Heart right ventricle (tissue), 16 donors: ENCODE measurements at regions of chr1 and their contacts with region 1.

Region 1: DNA sequence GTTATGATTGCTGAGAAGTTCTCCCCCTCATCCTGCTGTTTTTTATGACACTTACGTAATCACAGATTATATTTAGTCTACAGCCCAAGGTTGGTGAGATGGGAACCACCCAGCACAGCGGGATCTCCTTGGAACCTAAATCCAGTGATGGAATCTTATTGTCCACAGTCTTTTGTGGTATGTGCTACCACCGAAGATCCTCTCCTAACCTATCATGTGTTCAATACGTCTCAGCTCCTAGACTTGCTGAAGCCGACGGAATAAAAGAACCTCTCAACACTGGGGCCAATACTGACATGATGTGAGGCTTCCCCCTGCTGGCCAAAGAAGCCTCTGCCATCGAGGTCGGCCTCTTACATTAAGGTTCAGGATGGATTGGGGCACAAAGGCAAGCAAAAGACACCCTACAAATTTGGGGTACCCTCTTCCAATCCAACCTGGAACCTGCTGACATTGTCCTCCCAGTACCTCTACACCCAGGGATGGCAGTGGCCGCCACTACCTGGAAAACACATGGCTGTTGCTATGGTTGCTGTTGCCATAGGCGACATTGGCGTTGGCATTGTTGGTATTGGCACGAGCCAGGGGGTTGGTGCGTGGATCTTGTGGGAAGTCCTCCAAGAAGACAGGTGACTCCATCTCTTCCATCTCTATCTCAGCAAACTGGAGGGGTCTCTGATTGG is 19.4 kb upstream of the KIF21B start:
- DNase-seq: peak; percentile 38 to 55
- ATAC-seq: peak; percentile 66 to 86 (median 82)
- H3K4me3 ChIP-seq: no peak overlapping the region
- H3K27ac ChIP-seq: no peak overlapping the region
- H3K4me1 ChIP-seq: peaks cover 0 to 9% (median 4%) of the 10 kb centered on the region in 9 donors
- H3K27me3 ChIP-seq: peaks cover 0 to 15% (median 8%) of the 10 kb centered on the region in 7 donors
- CTCF ChIP-seq: peak; percentile 56 to 89 (median 86)

Region 2: GRCh38 chr1:200558866-200559459 is 484.0 kb before region 1 on chr1:
- intact Hi-C with region 1: loop called in 3 of 10 experiments (anchors 5 kb)
- DNase-seq: peak in 1 of 2 donors; percentile 5
- ATAC-seq: no peak
- H3K4me3 ChIP-seq: no peak overlapping the region
- H3K27ac ChIP-seq: no peak overlapping the region
- H3K4me1 ChIP-seq: no peaks in the 10 kb centered on the region
- H3K27me3 ChIP-seq: no peaks in the 10 kb centered on the region
- CTCF ChIP-seq: peak; percentile 11 to 69 (median 55)

Region 3: DNA sequence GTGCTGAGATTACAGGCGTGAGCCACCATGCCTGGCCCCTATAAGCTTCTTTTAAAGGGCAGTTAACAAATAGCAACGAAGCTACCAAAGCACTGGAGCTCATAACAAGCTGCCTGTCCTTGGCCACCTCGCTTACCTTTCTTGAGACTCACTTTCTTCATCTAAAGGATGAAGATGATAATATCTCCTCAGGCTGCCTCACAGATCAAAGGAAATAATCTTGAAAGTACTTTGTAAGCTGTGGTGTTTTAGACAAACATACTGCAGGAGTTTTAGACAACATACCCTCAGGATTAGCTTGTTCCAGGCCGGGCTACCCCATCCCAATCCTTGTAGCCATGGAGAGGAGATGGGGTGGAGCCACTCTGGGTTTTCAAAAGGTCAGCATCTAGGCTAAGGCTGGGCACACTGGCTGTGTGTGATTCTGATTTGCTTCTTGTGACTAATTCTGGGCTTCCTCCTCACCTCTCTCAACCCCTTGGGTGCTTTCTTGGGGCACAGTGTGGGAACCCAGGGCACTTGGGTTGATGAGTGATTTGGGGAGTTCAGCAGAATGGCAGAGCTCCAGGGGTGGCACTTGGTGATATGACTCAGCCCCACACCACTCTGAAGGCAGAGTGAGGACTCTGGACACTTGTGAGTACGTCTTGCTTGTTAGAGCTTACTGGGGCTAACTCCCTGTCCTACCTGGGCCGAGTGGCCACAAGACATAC is 164.9 kb before region 1 on chr1:
- intact Hi-C with region 1: loop called in 1 of 10 experiments (anchors 10 kb)
- DNase-seq: no peak
- ATAC-seq: no peak
- H3K4me3 ChIP-seq: no peak overlapping the region
- H3K27ac ChIP-seq: no peak overlapping the region
- H3K4me1 ChIP-seq: peaks cover 6 to 11% (median 10%) of the 10 kb centered on the region in 9 donors
- H3K27me3 ChIP-seq: peaks cover 11 to 88% (median 61%) of the 10 kb centered on the region in 7 donors
- CTCF ChIP-seq: no peak

Region 4: DNA sequence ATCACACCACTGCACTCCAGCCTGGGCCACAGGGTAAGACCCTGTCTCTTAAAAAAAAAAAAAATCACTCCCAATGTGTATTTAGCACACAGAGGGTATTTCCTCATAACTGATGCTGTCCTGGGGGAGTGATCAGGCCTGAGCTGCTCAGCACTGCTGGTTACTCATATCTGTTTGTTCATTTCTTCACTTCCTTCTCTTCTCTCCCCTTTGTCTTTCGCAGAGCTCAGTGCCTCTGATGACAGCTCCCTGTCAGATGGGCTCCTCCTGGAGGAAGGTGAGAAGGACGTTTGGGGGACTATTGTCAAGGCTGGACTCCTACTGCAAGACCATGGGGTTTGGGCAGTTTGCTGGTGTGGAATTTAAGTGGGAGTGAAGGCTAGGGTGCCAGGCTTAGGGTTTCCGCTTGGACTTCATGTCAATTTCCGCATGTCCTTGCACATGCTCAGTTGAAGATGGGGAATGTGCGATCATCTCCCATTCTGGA is 135.3 kb before region 1 on chr1:
- intact Hi-C with region 1: loop called in 1 of 10 experiments (anchors 10 kb)
- DNase-seq: no peak
- ATAC-seq: no peak
- H3K4me3 ChIP-seq: no peak overlapping the region
- H3K27ac ChIP-seq: no peak overlapping the region
- H3K4me1 ChIP-seq: peaks cover 0 to 14% (median 0%) of the 10 kb centered on the region in 9 donors
- H3K27me3 ChIP-seq: peaks cover 0 to 6% (median 0%) of the 10 kb centered on the region in 7 donors
- CTCF ChIP-seq: no peak